Activated CD8-positive, alpha-beta T cell treated with anti-CD3 and anti-CD28 coated beads for 36 hours (primary cell): ENCODE measurements at regions of chr20 and their contacts with region 1.

Region 1: GRCh38 chr20:53708129-53708968 is 114.7 kb upstream of the ZNF217 start:
- DNase-seq: peak; percentile 75
- ATAC-seq: peak; percentile 79
- H3K4me3 Mint-ChIP-seq: peak overlapping the region; percentile 70
- H3K27ac Mint-ChIP-seq: peak overlapping the region; percentile 96
- H3K4me1 Mint-ChIP-seq: peaks cover 56% of the 10 kb centered on the region
- H3K27me3 Mint-ChIP-seq: no peaks in the 10 kb centered on the region
- CTCF ChIP-seq: no peak

Region 2: GRCh38 chr20:53623454-53624211 is 84.7 kb before region 1 on chr20:
- CTCF ChIA-PET with region 1: no interaction called
- POLR2A ChIA-PET with region 1: interaction called, 11 read pairs
- intact Hi-C with region 1: no loop called
- DNase-seq: peak; percentile 63
- ATAC-seq: peak; percentile 65
- H3K4me3 Mint-ChIP-seq: peak overlapping the region; percentile 62
- H3K27ac Mint-ChIP-seq: peak overlapping the region; percentile 95
- H3K4me1 Mint-ChIP-seq: peaks cover 46% of the 10 kb centered on the region
- H3K27me3 Mint-ChIP-seq: no peaks in the 10 kb centered on the region
- CTCF ChIP-seq: no peak

Region 3: GRCh38 chr20:53652090-53652858 is 56.1 kb before region 1 on chr20:
- CTCF ChIA-PET with region 1: interaction called, 5 read pairs
- POLR2A ChIA-PET with region 1: interaction called, 7 read pairs
- intact Hi-C with region 1: loop called (anchors 2 kb)
- DNase-seq: peak; percentile 13
- ATAC-seq: peak; percentile 71
- H3K4me3 Mint-ChIP-seq: peak overlapping the region; percentile 72
- H3K27ac Mint-ChIP-seq: peak overlapping the region; percentile 97
- H3K4me1 Mint-ChIP-seq: peaks cover 43% of the 10 kb centered on the region
- H3K27me3 Mint-ChIP-seq: no peaks in the 10 kb centered on the region
- CTCF ChIP-seq: no peak

Region 4: GRCh38 chr20:53688085-53688484 is 20.3 kb before region 1 on chr20:
- CTCF ChIA-PET with region 1: interaction called, 4 read pairs
- POLR2A ChIA-PET with region 1: interaction called, 11 read pairs
- intact Hi-C with region 1: no loop called
- DNase-seq: no peak
- ATAC-seq: no peak
- H3K4me3 Mint-ChIP-seq: no peak overlapping the region
- H3K27ac Mint-ChIP-seq: no peak overlapping the region
- H3K4me1 Mint-ChIP-seq: peaks cover 48% of the 10 kb centered on the region
- H3K27me3 Mint-ChIP-seq: no peaks in the 10 kb centered on the region
- CTCF ChIP-seq: no peak

Region 5: DNA sequence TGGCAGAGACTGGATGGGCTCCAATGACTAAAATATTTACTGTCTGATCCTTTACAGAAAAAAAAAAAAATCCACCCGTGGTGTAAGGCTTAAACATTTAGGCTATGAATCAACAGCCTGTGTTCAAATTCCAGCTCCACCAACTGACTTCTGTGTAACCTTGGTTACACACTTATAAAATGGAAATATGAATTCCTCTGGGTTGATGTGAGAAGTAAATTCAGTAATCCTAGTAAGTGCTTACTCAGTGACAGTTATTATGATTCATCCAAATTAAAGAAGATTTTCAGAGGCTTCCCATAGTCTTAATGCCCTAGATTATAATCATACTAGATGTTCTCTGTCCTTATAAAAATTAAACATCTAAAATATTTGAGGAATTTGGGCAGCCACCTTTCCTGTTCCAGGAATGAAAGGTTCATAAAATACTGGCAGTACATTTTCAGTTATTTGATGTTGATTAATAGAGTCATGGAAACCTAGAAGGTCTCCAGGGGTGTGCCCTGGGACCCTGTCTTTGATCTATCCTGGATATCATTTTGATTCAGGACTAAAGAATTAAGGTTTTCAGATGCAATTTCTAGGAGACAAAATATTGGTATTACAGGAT is 65.5 kb after region 1 on chr20:
- CTCF ChIA-PET with region 1: no interaction called
- POLR2A ChIA-PET with region 1: no interaction called
- intact Hi-C with region 1: no loop called
- DNase-seq: no peak
- ATAC-seq: peak; percentile 77
- H3K4me3 Mint-ChIP-seq: no peak overlapping the region
- H3K27ac Mint-ChIP-seq: no peak overlapping the region
- H3K4me1 Mint-ChIP-seq: no peaks in the 10 kb centered on the region
- H3K27me3 Mint-ChIP-seq: no peaks in the 10 kb centered on the region
- CTCF ChIP-seq: no peak

Region 6: DNA sequence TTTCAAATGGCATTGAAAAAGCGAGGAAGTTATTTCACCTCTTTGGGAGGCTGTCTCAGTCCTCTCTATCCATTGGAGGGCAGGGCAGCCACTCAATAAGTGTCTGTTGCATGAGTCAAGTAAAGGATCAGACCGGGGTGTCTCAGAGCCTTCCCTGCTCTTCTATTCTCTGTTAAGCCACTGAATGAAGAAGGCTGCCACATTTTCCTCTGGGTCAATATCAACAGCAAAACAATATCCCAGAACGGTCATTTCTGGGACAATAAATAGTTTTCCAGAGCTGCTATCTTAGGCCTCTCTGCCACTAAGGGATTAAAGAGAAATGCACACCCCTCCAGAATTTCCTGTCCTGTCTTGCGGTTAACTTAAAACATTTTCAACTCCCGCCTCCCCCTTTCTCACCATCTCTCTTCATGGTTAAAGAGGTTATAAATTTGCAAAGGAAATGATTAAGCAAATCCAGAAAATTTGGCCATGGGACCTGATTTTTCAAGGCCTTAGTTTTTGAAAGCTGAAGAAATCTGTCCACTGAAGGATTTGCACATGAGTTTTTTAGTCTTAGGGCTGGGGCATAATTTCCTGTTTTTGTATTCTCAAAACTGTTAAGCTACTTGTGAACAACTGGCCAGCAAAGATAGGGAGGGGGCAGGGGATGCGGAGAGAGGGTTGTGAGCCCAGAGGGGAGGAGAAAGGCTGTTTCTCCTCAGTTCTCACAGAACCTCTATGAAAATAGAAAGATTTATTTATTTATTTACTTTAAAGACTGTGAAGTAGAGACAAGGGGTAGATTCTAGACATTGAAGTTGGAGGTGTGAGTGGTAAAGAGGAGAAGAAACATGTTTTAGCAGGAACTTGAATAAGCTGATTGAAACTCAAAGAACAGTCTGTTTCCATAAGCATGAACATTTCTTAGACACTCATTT is 226.3 kb after region 1 on chr20:
- CTCF ChIA-PET with region 1: interaction called, 3 read pairs
- POLR2A ChIA-PET with region 1: no interaction called
- intact Hi-C with region 1: loop called (anchors 5 kb)
- DNase-seq: peak; percentile 63
- ATAC-seq: peak; percentile 85
- H3K4me3 Mint-ChIP-seq: peak overlapping the region; percentile 26
- H3K27ac Mint-ChIP-seq: peak overlapping the region; percentile 86
- H3K4me1 Mint-ChIP-seq: peaks cover 60% of the 10 kb centered on the region
- H3K27me3 Mint-ChIP-seq: no peaks in the 10 kb centered on the region
- CTCF ChIP-seq: no peak

Region 7: DNA sequence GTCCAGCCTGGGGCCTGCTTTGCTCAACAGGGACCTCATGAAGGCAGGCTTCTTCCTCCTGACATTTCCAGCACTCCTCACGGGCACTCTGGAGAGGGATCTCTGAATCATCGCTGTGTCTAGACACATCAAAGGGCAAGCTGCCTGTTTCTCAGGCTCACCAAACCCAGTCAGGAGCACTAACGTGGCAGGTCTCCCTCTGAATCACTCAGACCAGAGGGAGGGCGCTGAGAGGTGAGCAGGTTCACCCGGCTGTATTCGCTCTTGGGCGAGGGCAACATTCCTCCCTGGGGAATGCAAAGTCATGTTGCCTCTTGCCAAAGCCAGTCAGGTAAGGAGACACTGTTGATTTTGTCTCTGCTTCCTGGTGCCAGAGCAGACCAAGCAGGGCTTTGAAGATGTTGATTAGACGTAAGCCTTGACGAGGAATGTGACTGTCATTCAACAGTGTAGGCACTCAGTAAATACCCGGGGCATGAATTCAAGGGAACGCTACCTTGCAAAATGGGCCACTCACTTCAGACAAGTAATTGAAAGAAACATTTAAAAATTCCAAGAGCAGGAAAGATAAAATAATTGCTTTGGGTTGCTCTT is 415.3 kb after region 1 on chr20:
- CTCF ChIA-PET with region 1: no interaction called
- POLR2A ChIA-PET with region 1: no interaction called
- intact Hi-C with region 1: no loop called
- DNase-seq: no peak
- ATAC-seq: no peak
- H3K4me3 Mint-ChIP-seq: no peak overlapping the region
- H3K27ac Mint-ChIP-seq: no peak overlapping the region
- H3K4me1 Mint-ChIP-seq: no peaks in the 10 kb centered on the region
- H3K27me3 Mint-ChIP-seq: peaks cover 1% of the 10 kb centered on the region
- CTCF ChIP-seq: no peak